BJ (cell line): ENCODE measurements at regions of chrX and their contacts with region 1.

Region 1: GRCh38 chrX:53654376-53654775 is 32.1 kb downstream of the HUWE1 start:
- DNase-seq: no peak
- H3K4me3 ChIP-seq: no peak overlapping the region
- H3K27me3 ChIP-seq: no peaks in the 10 kb centered on the region
- CTCF ChIP-seq: no peak

Region 2: DNA sequence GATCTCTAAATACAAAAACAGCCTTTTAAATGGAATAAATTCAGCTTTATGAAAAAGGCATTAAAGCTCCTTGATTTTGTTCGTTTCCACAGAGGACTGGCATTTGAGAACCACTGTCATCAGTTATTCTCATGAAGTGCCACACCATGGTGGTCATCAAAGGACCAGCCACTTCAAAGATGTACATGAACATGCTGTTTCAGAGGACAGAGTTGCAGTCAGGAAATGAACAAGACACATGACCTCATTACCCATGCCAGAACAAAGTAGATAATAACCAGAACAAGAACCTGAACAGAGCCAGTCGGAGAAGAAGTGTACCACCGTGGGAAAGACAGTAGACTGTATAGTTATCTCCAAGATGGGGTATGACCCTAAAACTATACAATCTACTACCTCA is 97.5 kb before region 1 on chrX:
- CTCF ChIA-PET with region 1: no interaction called
- POLR2A ChIA-PET with region 1: no interaction called
- DNase-seq: no peak
- H3K4me3 ChIP-seq: no peak overlapping the region
- H3K27me3 ChIP-seq: no peaks in the 10 kb centered on the region
- CTCF ChIP-seq: no peak

Region 3: GRCh38 chrX:53674581-53674980 is 20.2 kb after region 1 on chrX:
- CTCF ChIA-PET with region 1: interaction called, 3 read pairs
- POLR2A ChIA-PET with region 1: interaction called, 29 read pairs
- DNase-seq: no peak
- H3K4me3 ChIP-seq: no peak overlapping the region
- H3K27me3 ChIP-seq: no peaks in the 10 kb centered on the region
- CTCF ChIP-seq: no peak

Region 4: DNA sequence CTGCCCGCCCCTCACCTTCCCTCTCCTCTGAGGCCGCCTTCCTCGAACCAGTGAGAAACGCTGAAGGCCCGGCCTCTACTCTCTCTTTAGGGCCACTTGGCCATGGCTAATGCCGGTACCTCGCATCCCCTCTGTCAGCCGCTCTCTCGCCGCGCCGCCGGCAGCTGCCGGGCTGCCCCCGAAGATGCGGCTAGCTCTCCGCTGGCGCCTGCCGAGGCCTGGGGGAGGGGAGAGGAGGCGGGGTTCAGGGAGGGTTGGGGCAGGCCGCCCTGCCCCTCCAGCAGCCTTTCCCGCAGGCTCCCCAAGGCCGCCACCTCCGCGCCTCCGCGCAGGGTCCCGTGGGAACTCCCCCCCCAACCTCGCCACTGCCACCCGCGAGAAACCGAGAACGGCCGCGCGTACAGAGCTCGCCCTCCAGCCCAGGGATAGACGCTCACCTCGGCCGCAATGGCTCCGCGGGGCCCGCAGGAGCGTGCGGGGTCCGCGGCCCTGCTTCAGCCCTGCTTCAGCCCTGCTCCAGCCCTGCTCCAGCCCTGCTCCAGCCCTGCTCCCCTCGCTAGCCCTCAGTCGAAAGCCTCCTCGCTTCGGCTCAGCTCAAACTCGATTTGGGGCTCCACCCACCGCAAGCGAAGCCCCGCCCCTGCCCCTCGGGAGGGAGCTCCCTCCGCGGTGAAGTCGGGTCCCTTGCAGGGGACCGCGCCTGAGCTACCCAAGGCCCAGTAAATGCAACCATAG is 31.9 kb after region 1 on chrX and contains the start of gene HUWE1:
- CTCF ChIA-PET with region 1: no interaction called
- POLR2A ChIA-PET with region 1: no interaction called
- DNase-seq: no peak
- H3K4me3 ChIP-seq: peak within 1 kb of the TSS; percentile 81
- H3K27me3 ChIP-seq: no peaks in the 10 kb centered on the region
- CTCF ChIP-seq: no peak
- polyA plus RNA-seq, gene HUWE1: 57.5 and 62.1 TPM in 2 replicates